Common myeloid progenitor, CD34-positive (primary cell): ENCODE measurements at regions of chr1 and their contacts with region 1.

Region 1: GRCh38 chr1:202274611-202275010 is 67.1 kb downstream of the UBE2T start:
- DNase-seq: peak; percentile 43 to 59 (median 51)
- H3K4me3 ChIP-seq: no peak overlapping the region
- H3K27ac ChIP-seq: no peak overlapping the region
- H3K4me1 ChIP-seq: peaks cover 0 to 3% (median 0%) of the 10 kb centered on the region in 4 experiments
- H3K27me3 ChIP-seq: peaks cover 0 to 24% (median 9%) of the 10 kb centered on the region in 5 experiments

Region 2: DNA sequence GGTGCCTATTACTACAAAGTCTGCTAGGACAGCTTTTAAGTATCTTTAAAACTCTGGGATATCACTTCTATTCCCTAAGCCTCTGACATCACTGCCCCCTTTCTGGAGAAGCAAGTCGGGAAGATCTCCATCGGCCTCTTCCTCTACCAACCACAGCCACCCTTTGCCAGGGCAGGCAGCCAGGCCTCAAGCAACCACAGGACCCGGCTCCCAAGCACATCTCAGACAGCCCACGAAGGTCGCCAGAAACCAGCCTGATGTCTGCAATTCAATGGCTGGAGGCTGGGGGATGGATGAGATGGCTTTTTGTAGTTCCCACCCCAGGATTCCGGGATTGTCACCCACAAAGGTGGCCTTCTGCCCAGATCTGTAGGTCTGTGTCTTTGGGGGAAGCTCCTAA is 10.3 kb before region 1 on chr1:
- CTCF ChIA-PET with region 1: interaction called, 18 read pairs
- POLR2A ChIA-PET with region 1: no interaction called
- DNase-seq: peak in 1 of 3 donors; percentile 43
- H3K4me3 ChIP-seq: no peak overlapping the region
- H3K27ac ChIP-seq: no peak overlapping the region
- H3K4me1 ChIP-seq: peaks cover 0 to 10% (median 3%) of the 10 kb centered on the region in 4 experiments
- H3K27me3 ChIP-seq: peaks cover 0 to 13% (median 12%) of the 10 kb centered on the region in 5 experiments

Region 3: DNA sequence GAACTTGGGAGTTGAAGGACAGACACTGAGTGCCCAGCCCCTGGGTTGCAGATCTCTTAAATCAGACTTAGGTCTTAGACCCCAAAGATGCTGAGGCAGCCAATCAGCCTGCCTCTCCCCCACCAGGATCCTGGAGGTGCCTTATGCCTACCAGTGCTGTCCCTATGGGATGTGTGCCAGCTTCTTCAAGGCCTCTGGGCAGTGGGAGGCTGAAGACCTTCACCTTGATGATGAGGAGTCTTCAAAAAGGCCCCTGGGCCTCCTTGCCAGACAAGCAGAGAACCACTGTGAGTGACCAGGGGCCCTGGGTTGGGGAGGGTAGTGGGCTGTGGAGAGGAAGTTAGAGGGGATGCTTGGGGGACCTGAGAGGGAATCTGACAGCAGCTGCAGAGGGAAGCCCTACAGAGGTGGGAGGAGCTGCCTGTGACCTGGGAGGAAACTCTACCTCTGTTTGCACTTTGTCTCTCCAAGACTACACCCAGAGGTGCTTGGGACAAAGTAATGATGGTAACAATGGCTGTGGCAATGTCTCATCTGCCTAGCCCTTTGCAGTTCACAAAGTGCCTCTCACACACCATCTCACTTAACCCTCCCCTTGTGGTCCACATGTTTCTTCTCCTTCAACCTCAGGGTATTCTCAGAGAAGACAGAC is 35.6 kb after region 1 on chr1:
- CTCF ChIA-PET with region 1: interaction called, 47 read pairs
- POLR2A ChIA-PET with region 1: no interaction called
- DNase-seq: no peak
- H3K4me3 ChIP-seq: no peak overlapping the region
- H3K27ac ChIP-seq: no peak overlapping the region
- H3K4me1 ChIP-seq: peaks cover 0 to 9% (median 0%) of the 10 kb centered on the region in 4 experiments
- H3K27me3 ChIP-seq: peaks cover 0 to 26% (median 7%) of the 10 kb centered on the region in 5 experiments